Activated CD4-positive, alpha-beta memory T cell treated with anti-CD3 and anti-CD28 coated beads, Interleukin-2, amount 10 ng/mL, durations not matched to agents 7 days and 5 days (primary cell): ENCODE measurements at regions of chr15 and their contacts with region 1.

Region 1: DNA sequence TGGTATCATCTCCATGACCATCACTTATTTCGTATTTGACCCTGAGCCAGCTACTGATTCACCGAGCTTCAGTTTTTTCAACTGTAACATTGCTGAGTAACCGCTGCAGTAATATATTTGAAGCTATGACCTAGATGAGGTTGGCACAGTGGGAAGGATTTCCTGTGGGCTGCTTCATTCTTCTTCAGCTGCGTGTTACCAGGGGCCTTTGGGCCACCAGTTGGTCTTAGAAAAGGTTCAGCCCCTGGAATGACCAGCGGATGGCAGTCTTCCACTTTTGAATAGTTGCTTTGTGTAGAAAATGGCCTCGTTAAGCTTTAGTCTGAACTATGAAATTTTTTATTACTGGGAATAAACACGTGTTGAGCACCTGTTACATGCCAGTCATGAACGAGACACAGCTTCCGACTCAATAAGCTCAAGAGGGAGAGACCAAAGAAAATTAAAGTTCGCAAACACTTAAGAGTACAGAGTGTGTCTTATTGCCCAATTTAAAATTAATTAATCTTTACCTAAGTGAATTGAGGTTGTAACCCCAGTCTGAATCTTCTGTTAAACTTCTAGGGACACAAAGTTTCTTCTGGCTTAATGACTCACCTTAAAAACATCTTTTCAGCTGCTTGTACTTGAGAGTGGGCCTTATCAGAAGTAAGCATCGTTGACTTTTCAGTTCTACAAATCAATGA is 57.6 kb upstream of the NR2E3 start:
- DNase-seq: peak; percentile 38
- H3K4me3 Mint-ChIP-seq: no peak overlapping the region
- H3K27ac Mint-ChIP-seq: no peak overlapping the region
- H3K4me1 Mint-ChIP-seq: peaks cover 8% of the 10 kb centered on the region
- H3K27me3 Mint-ChIP-seq: peaks cover 13% of the 10 kb centered on the region

Region 2: GRCh38 chr15:71261909-71262308 is 490.8 kb before region 1 on chr15:
- CTCF ChIA-PET with region 1: no interaction called
- POLR2A ChIA-PET with region 1: no interaction called
- DNase-seq: no peak
- H3K4me3 Mint-ChIP-seq: no peak overlapping the region
- H3K27ac Mint-ChIP-seq: no peak overlapping the region
- H3K4me1 Mint-ChIP-seq: no peaks in the 10 kb centered on the region
- H3K27me3 Mint-ChIP-seq: no peaks in the 10 kb centered on the region

Region 3: GRCh38 chr15:71780115-71780976 is 27.6 kb after region 1 on chr15:
- CTCF ChIA-PET with region 1: interaction called, 11 read pairs
- POLR2A ChIA-PET with region 1: interaction called, 4 read pairs
- DNase-seq: peak; percentile 44
- H3K4me3 Mint-ChIP-seq: no peak overlapping the region
- H3K27ac Mint-ChIP-seq: peak overlapping the region; percentile 53
- H3K4me1 Mint-ChIP-seq: peaks cover 22% of the 10 kb centered on the region
- H3K27me3 Mint-ChIP-seq: peaks cover 3% of the 10 kb centered on the region

Region 4: GRCh38 chr15:71800835-71801745 is 48.3 kb after region 1 on chr15:
- CTCF ChIA-PET with region 1: interaction called, 16 read pairs
- POLR2A ChIA-PET with region 1: no interaction called
- DNase-seq: peak; percentile 30
- H3K4me3 Mint-ChIP-seq: no peak overlapping the region
- H3K27ac Mint-ChIP-seq: no peak overlapping the region
- H3K4me1 Mint-ChIP-seq: no peaks in the 10 kb centered on the region
- H3K27me3 Mint-ChIP-seq: peaks cover 6% of the 10 kb centered on the region